ENCODE measurements at regions of chr7 and their contacts with region 1.

Region 1: DNA sequence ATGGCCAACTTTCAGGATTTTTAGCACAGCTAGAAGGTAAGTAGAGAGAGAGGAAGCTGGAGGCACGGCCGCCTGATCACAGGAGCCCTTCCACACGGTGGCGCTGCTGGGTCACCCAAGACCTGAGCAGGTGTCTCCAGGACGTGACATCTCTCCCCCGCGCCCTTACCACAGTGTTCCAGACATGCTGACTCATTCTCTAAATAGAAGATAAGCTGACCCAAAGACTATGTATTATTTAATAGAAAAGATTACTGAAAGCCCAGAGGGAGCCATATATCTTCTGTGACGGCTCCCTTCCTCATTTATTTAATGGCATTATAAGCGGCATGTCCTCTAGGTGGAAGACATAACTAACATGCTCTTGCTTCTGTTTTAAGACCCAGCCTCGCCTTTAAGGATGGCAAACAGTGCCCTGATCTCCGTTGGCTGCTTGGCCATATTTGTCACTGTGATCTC is 26.0 kb upstream of the MALSU1 start:
- DNase-seq: peak; percentile 64 to 85 (median 80)
- ATAC-seq: peak; percentile 99
- H3K4me3 ChIP-seq: no peak overlapping the region
- H3K4me3 Mint-ChIP-seq: peak overlapping the region; percentile 14 to 82 (median 70)
- H3K27ac ChIP-seq: no peak overlapping the region
- H3K27ac Mint-ChIP-seq: peak overlapping the region in 4 of 9 donors; percentile 3 to 54 (median 23)
- H3K4me1 ChIP-seq: peaks cover 0 to 4% of the 10 kb centered on the region in 2 donors
- H3K4me1 Mint-ChIP-seq: peaks cover 2 to 16% (median 10%) of the 10 kb centered on the region in 7 donors
- H3K27me3 ChIP-seq: no peaks in the 10 kb centered on the region
- H3K27me3 Mint-ChIP-seq: peaks cover 0 to 9% (median 4%) of the 10 kb centered on the region in 5 donors

Region 2: DNA sequence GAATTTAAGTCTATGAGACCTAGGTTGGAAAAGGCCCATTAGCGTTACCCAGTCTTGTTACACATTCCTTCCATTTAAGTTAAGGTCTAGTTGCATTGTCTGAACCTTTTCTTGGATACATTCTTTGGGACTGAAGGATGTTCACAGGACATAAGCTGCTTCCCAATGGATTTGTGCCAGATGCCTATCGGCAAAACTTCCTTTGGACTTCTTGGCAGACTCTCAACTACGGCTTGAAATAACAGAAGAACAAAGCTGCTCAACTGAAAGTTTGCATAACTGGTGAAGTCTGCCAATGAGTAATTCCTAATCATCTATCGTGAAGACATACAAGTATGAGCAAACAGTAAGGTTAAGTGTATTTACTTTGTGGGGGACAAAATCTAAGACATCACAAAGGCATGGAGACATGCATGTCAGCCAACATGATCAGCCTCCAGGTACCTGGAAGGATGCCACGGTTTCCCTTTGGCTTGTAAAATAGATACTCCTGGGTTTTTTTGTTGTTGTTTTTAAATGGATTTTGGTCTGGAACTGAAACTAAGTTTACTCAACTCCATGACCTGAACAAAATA is 61.4 kb after region 1 on chr7:
- CTCF ChIA-PET with region 1: no interaction called
- POLR2A ChIA-PET with region 1: no interaction called
- intact Hi-C with region 1: loop called in 1 of 2 experiments (anchors 1 kb)
- DNase-seq: no peak
- ATAC-seq: no peak
- H3K4me3 ChIP-seq: no peak overlapping the region
- H3K4me3 Mint-ChIP-seq: no peak overlapping the region
- H3K27ac ChIP-seq: no peak overlapping the region
- H3K27ac Mint-ChIP-seq: no peak overlapping the region
- H3K4me1 ChIP-seq: no peaks in the 10 kb centered on the region
- H3K4me1 Mint-ChIP-seq: peaks cover 0 to 4% (median 0%) of the 10 kb centered on the region in 7 donors
- H3K27me3 ChIP-seq: no peaks in the 10 kb centered on the region
- H3K27me3 Mint-ChIP-seq: peaks cover 0 to 24% (median 3%) of the 10 kb centered on the region in 5 donors

Region 3: GRCh38 chr7:23357190-23358093 is 84.3 kb after region 1 on chr7:
- CTCF ChIA-PET with region 1: no interaction called
- POLR2A ChIA-PET with region 1: no interaction called
- intact Hi-C with region 1: loop called (anchors 1 kb)
- DNase-seq: peak in 4 of 9 donors; percentile 17 to 37 (median 22)
- ATAC-seq: peak; percentile 55
- H3K4me3 ChIP-seq: no peak overlapping the region
- H3K4me3 Mint-ChIP-seq: peak overlapping the region in 2 of 10 donors; percentile 3 to 51
- H3K27ac ChIP-seq: no peak overlapping the region
- H3K27ac Mint-ChIP-seq: no peak overlapping the region
- H3K4me1 ChIP-seq: peaks cover 5 to 6% of the 10 kb centered on the region in 2 donors
- H3K4me1 Mint-ChIP-seq: peaks cover 5 to 19% (median 14%) of the 10 kb centered on the region in 7 donors
- H3K27me3 ChIP-seq: no peaks in the 10 kb centered on the region
- H3K27me3 Mint-ChIP-seq: peaks cover 0 to 47% (median 12%) of the 10 kb centered on the region in 5 donors

Region 4: DNA sequence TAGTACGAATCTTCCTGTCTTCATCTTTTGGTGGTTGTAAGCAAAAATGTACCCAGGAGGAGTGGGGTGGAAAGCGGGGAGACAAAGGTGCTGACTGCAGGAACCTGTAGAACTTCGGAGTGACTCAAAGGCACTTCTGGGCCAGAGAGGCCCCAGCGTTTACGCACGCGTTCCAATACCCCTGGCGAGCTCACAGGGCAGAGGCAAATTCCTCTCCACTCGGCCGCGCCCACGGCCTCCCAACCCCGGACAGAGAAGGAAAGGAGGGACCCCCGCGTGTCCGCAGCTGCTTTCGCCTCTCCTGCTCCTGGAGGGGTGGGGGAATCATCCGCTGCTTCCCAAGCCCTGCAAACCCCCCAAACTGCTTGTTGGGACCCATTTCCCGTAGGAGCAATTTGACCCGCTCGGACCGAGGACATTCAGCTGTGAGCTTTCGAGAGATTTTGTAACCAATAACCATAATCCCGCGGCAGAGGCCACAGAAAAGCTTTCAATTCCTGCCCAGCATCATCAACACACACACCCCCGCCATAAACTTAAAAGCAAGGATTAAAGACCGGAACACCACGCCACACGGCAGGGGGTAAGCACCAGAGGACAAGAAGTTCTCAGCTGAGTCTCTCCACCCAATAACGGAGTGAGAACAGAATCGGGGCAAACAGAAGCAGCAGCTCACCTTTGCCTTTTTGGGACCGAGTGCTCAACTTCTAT is 194.8 kb after region 1 on chr7:
- CTCF ChIA-PET with region 1: interaction called, 8 read pairs
- POLR2A ChIA-PET with region 1: no interaction called
- intact Hi-C with region 1: loop called (anchors 1 kb)
- DNase-seq: peak in 6 of 9 donors; percentile 14 to 36 (median 28)
- ATAC-seq: peak; percentile 30
- H3K4me3 ChIP-seq: no peak overlapping the region
- H3K4me3 Mint-ChIP-seq: peak overlapping the region; percentile 21 to 79 (median 74)
- H3K27ac ChIP-seq: no peak overlapping the region
- H3K27ac Mint-ChIP-seq: peak overlapping the region in 3 of 9 donors; percentile 18 to 64 (median 54)
- H3K4me1 ChIP-seq: peaks cover 26 to 32% of the 10 kb centered on the region in 2 donors
- H3K4me1 Mint-ChIP-seq: peaks cover 16 to 38% (median 32%) of the 10 kb centered on the region in 7 donors
- H3K27me3 ChIP-seq: peaks cover 34 to 46% of the 10 kb centered on the region in 2 donors
- H3K27me3 Mint-ChIP-seq: peaks cover 59 to 80% (median 68%) of the 10 kb centered on the region in 5 donors

Region 5: DNA sequence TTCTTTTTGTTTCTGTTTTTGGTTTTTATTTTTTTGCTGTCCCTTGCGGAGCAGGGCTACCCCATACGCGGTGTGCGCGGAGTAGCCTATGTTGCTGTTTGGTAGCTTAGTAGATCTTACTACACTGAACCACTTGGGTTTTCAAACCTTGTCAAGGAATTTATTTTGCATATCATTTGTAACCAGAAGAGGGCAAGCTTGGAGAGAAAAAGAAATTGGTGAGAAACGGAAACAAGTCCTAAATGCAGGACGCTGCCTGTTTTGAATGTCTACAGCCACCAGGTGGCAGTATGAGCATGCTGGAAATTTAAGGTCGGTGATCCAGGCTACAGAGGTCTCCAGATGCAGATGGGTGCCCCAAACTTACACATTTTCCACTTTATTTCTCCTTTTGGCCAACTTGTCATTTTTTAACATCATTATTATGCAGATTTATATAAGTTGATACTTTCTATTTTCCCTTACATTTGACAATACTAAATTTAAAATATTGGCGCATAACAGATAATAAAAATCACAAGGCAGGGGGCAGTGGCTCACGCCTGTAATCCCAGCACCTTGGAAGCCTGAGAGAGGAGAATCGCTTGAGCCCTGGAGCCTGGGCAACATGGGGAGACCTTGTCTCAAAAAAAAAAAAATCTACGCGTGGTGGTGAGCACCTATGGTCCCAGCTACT is 273.9 kb after region 1 on chr7:
- CTCF ChIA-PET with region 1: interaction called, 7 read pairs
- POLR2A ChIA-PET with region 1: no interaction called
- intact Hi-C with region 1: loop called (anchors 1 kb)
- DNase-seq: peak; percentile 37 to 89 (median 82)
- ATAC-seq: peak; percentile 98
- H3K4me3 ChIP-seq: no peak overlapping the region
- H3K4me3 Mint-ChIP-seq: no peak overlapping the region
- H3K27ac ChIP-seq: no peak overlapping the region
- H3K27ac Mint-ChIP-seq: peak overlapping the region in 6 of 9 donors; percentile 22 to 90 (median 40)
- H3K4me1 ChIP-seq: no peaks in the 10 kb centered on the region
- H3K4me1 Mint-ChIP-seq: peaks cover 0 to 14% (median 5%) of the 10 kb centered on the region in 7 donors
- H3K27me3 ChIP-seq: no peaks in the 10 kb centered on the region
- H3K27me3 Mint-ChIP-seq: peaks cover 0 to 5% (median 0%) of the 10 kb centered on the region in 5 donors

Region 6: DNA sequence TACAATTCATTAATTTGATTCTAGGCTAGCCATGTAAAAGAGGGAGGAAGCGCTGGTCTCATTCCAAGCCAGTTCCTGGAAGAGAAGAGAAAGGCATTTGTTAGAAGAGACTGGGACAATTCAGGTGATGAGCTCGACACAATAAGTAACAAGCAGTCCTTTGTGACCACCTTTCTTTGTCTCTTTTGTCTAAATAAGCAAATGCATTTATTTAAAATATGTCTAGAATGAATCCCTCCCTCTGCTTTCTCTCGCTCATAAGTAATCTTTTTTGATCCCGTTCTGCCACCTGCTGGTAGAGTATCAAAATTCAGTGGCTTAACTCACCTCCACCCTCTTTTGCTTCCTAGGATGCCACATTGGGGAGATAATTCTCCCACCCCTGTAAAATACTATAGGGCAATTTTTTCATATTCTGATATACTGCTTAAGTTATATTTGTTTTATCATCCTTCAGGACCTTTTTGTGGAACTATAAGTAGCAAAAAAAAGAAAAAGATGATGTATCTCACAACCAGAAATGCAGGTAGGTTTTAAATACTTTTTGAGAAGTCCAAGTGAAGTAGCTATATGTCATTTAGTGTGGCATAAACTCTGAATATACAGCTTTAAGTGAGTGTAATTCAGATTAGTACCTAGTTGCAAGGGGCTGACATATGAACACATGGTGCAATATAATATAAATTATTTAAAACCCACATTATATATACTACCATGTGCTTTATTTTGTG is 1392.6 kb after region 1 on chr7:
- CTCF ChIA-PET with region 1: no interaction called
- POLR2A ChIA-PET with region 1: no interaction called
- intact Hi-C with region 1: loop called in 1 of 2 experiments (anchors 5 kb)
- DNase-seq: peak in 8 of 9 donors; percentile 14 to 59 (median 37)
- ATAC-seq: peak; percentile 52
- H3K4me3 ChIP-seq: no peak overlapping the region
- H3K4me3 Mint-ChIP-seq: no peak overlapping the region
- H3K27ac ChIP-seq: no peak overlapping the region
- H3K27ac Mint-ChIP-seq: peak overlapping the region in 1 of 9 donors; percentile 21
- H3K4me1 ChIP-seq: no peaks in the 10 kb centered on the region
- H3K4me1 Mint-ChIP-seq: peaks cover 0 to 4% (median 0%) of the 10 kb centered on the region in 7 donors
- H3K27me3 ChIP-seq: no peaks in the 10 kb centered on the region
- H3K27me3 Mint-ChIP-seq: no peaks in the 10 kb centered on the region

Measured in naive thymus-derived CD4-positive, alpha-beta T cell (primary cell).